ENCODE measurements at regions of chr4 and their contacts with region 1.

Region 1: DNA sequence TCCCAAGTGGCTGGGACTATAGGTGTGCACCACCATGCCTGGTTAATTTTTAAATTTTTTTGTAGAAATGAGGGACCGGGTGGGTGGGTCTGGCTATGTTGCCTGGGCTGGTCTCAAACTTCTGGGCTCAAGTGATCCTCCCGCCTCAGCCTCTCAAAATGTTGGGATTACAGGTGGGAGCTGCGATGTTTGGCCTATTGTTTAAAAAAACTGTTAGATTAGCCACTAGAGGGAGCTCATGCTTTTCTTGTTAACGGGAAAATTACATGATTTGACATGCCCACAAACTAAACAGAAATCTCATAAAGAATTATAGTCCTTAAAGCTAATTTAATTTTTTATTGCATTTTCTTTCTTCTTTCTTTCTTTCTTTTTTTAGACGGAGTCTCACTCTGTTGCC is 5.0 kb upstream of the SDAD1 start:
- DNase-seq: no peak
- ATAC-seq: no peak
- H3K4me3 Mint-ChIP-seq: no peak overlapping the region
- H3K27ac Mint-ChIP-seq: no peak overlapping the region
- H3K4me1 Mint-ChIP-seq: peaks cover 5% of the 10 kb centered on the region
- H3K27me3 Mint-ChIP-seq: peaks cover 2% of the 10 kb centered on the region
- CTCF ChIP-seq: no peak

Region 2: GRCh38 chr4:75895744-75896314 is 99.9 kb before region 1 on chr4:
- CTCF ChIA-PET with region 1: interaction called, 13 read pairs
- POLR2A ChIA-PET with region 1: no interaction called
- intact Hi-C with region 1: loop called (anchors 2 kb)
- DNase-seq: no peak
- ATAC-seq: peak; percentile 70
- H3K4me3 Mint-ChIP-seq: no peak overlapping the region
- H3K27ac Mint-ChIP-seq: no peak overlapping the region
- H3K4me1 Mint-ChIP-seq: no peaks in the 10 kb centered on the region
- H3K27me3 Mint-ChIP-seq: no peaks in the 10 kb centered on the region
- CTCF ChIP-seq: no peak

Region 3: DNA sequence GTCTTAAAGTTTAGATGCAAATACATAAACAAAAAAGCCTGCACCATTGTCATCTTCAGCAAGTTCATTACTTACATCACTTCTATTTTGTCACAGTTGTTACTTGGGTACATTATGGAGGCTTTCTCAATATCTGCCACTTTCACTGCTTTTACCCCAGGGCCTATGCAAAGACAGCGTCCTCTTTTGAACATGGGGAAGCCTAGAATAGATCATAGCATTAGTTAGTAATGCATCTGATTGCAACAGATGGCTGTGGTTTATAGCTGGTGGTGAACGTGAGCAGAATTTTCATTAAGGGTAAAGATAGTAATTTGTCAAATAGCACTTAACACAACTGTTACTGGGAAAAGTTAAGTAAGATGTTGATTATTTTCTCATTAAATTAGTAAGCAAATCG is 39.4 kb after region 1 on chr4:
- CTCF ChIA-PET with region 1: interaction called, 11 read pairs
- POLR2A ChIA-PET with region 1: no interaction called
- intact Hi-C with region 1: no loop called
- DNase-seq: no peak
- ATAC-seq: no peak
- H3K4me3 Mint-ChIP-seq: no peak overlapping the region
- H3K27ac Mint-ChIP-seq: no peak overlapping the region
- H3K4me1 Mint-ChIP-seq: no peaks in the 10 kb centered on the region
- H3K27me3 Mint-ChIP-seq: no peaks in the 10 kb centered on the region
- CTCF ChIP-seq: no peak

Region 4: GRCh38 chr4:76055016-76055415 is 59.3 kb after region 1 on chr4:
- CTCF ChIA-PET with region 1: interaction called, 36 read pairs
- POLR2A ChIA-PET with region 1: interaction called, 5 read pairs
- intact Hi-C with region 1: no loop called
- DNase-seq: no peak
- ATAC-seq: peak; percentile 96
- H3K4me3 Mint-ChIP-seq: no peak overlapping the region
- H3K27ac Mint-ChIP-seq: peak overlapping the region; percentile 81
- H3K4me1 Mint-ChIP-seq: peaks cover 34% of the 10 kb centered on the region
- H3K27me3 Mint-ChIP-seq: no peaks in the 10 kb centered on the region
- CTCF ChIP-seq: no peak

Region 5: DNA sequence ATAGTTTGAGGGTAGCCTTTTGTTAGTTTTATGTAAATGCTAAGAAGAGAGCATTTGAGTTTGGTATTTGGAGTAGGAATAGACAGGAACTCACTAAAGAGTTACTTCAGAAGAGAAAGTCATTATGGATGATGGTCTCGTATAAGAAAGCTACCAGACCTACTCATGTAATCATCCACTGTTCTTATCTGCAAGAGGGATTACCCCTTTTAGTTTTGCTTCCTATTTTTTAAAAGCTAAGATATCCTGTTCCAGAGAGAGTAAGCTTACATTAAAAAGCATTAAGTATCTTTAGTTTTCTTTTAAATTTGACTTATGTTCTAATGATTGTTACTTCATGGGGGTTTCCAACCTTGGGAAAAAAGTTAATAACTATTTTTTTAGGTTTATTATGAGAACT is 66.3 kb after region 1 on chr4:
- CTCF ChIA-PET with region 1: interaction called, 117 read pairs
- POLR2A ChIA-PET with region 1: interaction called, 23 read pairs
- intact Hi-C with region 1: loop called (anchors 1 kb)
- DNase-seq: no peak
- ATAC-seq: peak; percentile 96
- H3K4me3 Mint-ChIP-seq: peak overlapping the region; percentile 49
- H3K27ac Mint-ChIP-seq: peak overlapping the region; percentile 75
- H3K4me1 Mint-ChIP-seq: peaks cover 42% of the 10 kb centered on the region
- H3K27me3 Mint-ChIP-seq: no peaks in the 10 kb centered on the region
- CTCF ChIP-seq: no peak

Region 6: GRCh38 chr4:76067652-76068286 is 72.0 kb after region 1 on chr4:
- CTCF ChIA-PET with region 1: interaction called, 117 read pairs
- POLR2A ChIA-PET with region 1: interaction called, 23 read pairs
- intact Hi-C with region 1: loop called (anchors 1 kb)
- DNase-seq: peak; percentile 25
- ATAC-seq: peak; percentile 87
- H3K4me3 Mint-ChIP-seq: no peak overlapping the region
- H3K27ac Mint-ChIP-seq: no peak overlapping the region
- H3K4me1 Mint-ChIP-seq: peaks cover 3% of the 10 kb centered on the region
- H3K27me3 Mint-ChIP-seq: no peaks in the 10 kb centered on the region
- CTCF ChIP-seq: no peak

Region 7: GRCh38 chr4:77075869-77076799 is 1080.4 kb after region 1 on chr4 and contains the start of gene CCNI:
- CTCF ChIA-PET with region 1: no interaction called
- POLR2A ChIA-PET with region 1: no interaction called
- intact Hi-C with region 1: no loop called
- DNase-seq: peak; percentile 93
- ATAC-seq: peak; percentile 77
- H3K4me3 Mint-ChIP-seq: no peak within 1 kb of the TSS
- H3K27ac Mint-ChIP-seq: peak within 1 kb of the TSS; percentile 100
- H3K4me1 Mint-ChIP-seq: peaks cover 40% of the 10 kb centered on the region
- H3K27me3 Mint-ChIP-seq: no peaks in the 10 kb centered on the region
- CTCF ChIP-seq: no peak
- total RNA-seq, gene CCNI: 237 and 246 TPM in 2 replicates